HepG2 (cell line): ENCODE measurements at regions of chr1 and their contacts with region 1.

Region 1: GRCh38 chr1:31715087-31715872 is 11.5 kb upstream of the COL16A1 start:
- DNase-seq: peak; percentile 86
- ATAC-seq: peak; percentile 96
- H3K4me3 ChIP-seq: peak overlapping the region; percentile 63 to 82 (median 71)
- H3K27ac ChIP-seq: peak overlapping the region; percentile 93
- H3K4me1 ChIP-seq: peaks cover 31% of the 10 kb centered on the region
- H3K27me3 ChIP-seq: no peaks in the 10 kb centered on the region; a peak in 1 of 5 replicates
- CTCF ChIP-seq: peak; percentile 89
- EP300 ChIP-seq: peak; percentile 11 to 35; a peak in 1 of 4 replicates
- POLR2A ChIP-seq: peak; percentile 85 to 95
- RAD21 ChIP-seq: peak; percentile 73

Region 2: GRCh38 chr1:31644560-31645273 is 70.6 kb before region 1 on chr1 and contains the start of gene PEF1:
- CTCF ChIA-PET with region 1: no interaction called
- POLR2A ChIA-PET with region 1: interaction called, 22 read pairs
- in situ Hi-C with region 1: no loop called
- intact Hi-C with region 1: no loop called
- DNase-seq: peak; percentile 94
- ATAC-seq: peak; percentile 89
- H3K4me3 ChIP-seq: peak within 1 kb of the TSS; percentile 72 to 87 (median 84)
- H3K27ac ChIP-seq: peak within 1 kb of the TSS; percentile 89
- H3K4me1 ChIP-seq: peaks cover 67% of the 10 kb centered on the region
- H3K27me3 ChIP-seq: no peaks in the 10 kb centered on the region; a peak in 1 of 5 replicates
- CTCF ChIP-seq: peak; percentile 2; the same call in 1 of the 2 replicates
- EP300 ChIP-seq: 0 out of 4 replicates have a peak, but pooled peaks of 1 of the 2 experiments have one; percentile 54
- POLR2A ChIP-seq: peak; percentile 12 to 74; a peak in 3 of 4 replicates
- RAD21 ChIP-seq: no peak; the same call in 1 of the 2 replicates
- total RNA-seq, gene PEF1: 57.1 and 85.7 TPM in 2 replicates

Region 3: GRCh38 chr1:31663622-31664452 is 51.4 kb before region 1 on chr1:
- CTCF ChIA-PET with region 1: interaction called, 20 read pairs
- POLR2A ChIA-PET with region 1: interaction called, 13 read pairs
- in situ Hi-C with region 1: no loop called
- intact Hi-C with region 1: no loop called
- DNase-seq: peak; percentile 28
- ATAC-seq: peak; percentile 54
- H3K4me3 ChIP-seq: no peak overlapping the region
- H3K27ac ChIP-seq: no peak overlapping the region
- H3K4me1 ChIP-seq: peaks cover 10% of the 10 kb centered on the region
- H3K27me3 ChIP-seq: no peaks in the 10 kb centered on the region
- CTCF ChIP-seq: peak; percentile 93
- EP300 ChIP-seq: no peak
- POLR2A ChIP-seq: no peak
- RAD21 ChIP-seq: peak; percentile 95

Region 4: DNA sequence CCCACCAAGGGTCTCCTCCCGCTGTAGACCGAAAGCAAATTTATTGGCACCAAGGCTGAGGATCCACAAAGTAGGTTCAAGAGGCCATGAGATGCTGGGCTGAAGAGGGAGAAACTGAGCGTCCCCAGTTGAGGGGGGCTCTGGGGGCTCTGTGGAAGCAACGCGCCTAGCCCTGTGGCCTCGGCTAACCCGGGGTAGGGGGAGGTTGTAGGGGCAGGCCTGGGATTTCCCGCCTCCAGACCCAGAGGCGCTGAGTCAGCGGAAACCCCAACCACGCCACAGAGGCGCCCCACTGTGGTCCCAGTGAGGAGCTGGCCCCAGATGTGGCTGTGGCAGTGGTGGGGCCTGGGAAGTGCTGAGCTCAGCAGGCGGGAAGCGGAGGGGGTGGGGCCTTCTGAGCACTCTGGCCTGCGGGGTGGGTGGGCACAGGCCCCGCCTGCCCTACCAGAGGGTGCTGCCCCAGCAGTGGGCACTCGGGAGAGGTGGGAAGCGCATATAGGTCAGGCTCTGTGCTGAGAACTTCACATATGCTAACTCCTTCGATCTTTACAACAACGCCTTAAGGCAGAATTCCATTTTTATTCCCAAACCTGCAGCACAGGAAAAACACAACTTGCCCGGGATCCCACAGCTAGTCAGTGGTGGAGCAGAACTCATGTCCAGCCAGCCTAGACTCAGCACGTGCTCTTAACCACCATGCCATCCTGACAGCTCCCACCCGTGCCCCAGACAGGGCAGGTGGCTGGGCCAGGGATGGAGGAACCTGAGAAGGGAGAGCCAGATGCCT is 10.0 kb before region 1 on chr1:
- CTCF ChIA-PET with region 1: interaction called, 3 read pairs
- POLR2A ChIA-PET with region 1: interaction called, 73 read pairs
- in situ Hi-C with region 1: no loop called
- intact Hi-C with region 1: no loop called
- DNase-seq: peak; percentile 68
- ATAC-seq: peak; percentile 54
- H3K4me3 ChIP-seq: peak overlapping the region; percentile 54 to 69 (median 55)
- H3K27ac ChIP-seq: peak overlapping the region; percentile 57
- H3K4me1 ChIP-seq: peaks cover 72% of the 10 kb centered on the region
- H3K27me3 ChIP-seq: peaks cover 2 to 18% of the 10 kb centered on the region in 2 experiments; a peak in 3 of 5 replicates
- CTCF ChIP-seq: peak; percentile 93
- EP300 ChIP-seq: no peak
- POLR2A ChIP-seq: no peak
- RAD21 ChIP-seq: peak; percentile 88

Region 5: GRCh38 chr1:31745096-31745945 is 30.0 kb after region 1 on chr1:
- CTCF ChIA-PET with region 1: no interaction called
- POLR2A ChIA-PET with region 1: interaction called, 5 read pairs
- in situ Hi-C with region 1: no loop called
- intact Hi-C with region 1: loop called (anchors 1 kb)
- DNase-seq: peak; percentile 27
- ATAC-seq: peak; percentile 91
- H3K4me3 ChIP-seq: no peak overlapping the region
- H3K27ac ChIP-seq: no peak overlapping the region
- H3K4me1 ChIP-seq: no peaks in the 10 kb centered on the region
- H3K27me3 ChIP-seq: peaks cover 1 to 34% of the 10 kb centered on the region in 2 experiments; a peak in 3 of 5 replicates
- CTCF ChIP-seq: peak; percentile 87
- EP300 ChIP-seq: no peak
- POLR2A ChIP-seq: no peak
- RAD21 ChIP-seq: peak; percentile 78

Region 6: DNA sequence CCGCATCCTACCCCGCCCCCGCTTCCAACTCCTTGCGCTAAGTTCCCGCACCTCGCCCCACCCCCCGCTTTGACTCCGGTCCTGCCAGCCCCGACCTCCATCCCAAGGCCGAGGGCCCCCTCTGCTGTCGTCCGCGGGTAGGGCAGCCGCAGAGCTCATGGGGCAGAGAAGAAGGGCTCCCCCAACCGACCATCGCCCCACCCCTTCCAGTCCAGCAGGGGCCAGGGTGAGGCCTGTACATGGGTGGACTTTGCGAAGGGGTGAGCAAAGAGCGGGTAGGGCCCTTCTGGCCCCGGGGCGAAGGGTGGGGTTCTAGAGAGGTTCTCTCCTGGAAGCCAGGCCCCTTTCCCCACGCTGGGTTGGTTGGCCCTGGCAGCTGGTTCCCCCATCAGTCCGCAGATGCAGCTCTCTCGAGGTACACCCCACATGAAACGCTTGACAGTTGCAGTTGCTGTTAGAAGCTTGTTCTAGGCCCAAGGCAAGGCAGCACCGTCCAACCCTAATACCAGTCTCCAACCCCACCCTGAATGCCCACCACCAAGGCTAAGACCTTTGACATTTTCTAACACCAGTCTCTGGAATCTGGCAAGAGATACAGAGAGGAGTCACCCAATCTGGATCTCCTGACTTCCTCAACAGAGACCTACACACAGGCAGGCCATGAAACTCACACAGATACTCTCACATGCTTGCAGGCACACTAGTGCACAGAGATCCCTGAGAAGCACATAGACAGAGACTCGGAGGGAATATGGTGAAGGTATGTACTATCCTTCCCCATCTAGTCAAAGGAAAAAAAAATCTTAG is 74.2 kb after region 1 on chr1:
- CTCF ChIA-PET with region 1: interaction called, 15 read pairs
- POLR2A ChIA-PET with region 1: interaction called, 9 read pairs
- in situ Hi-C with region 1: no loop called
- intact Hi-C with region 1: loop called (anchors 2 kb)
- DNase-seq: peak; percentile 77
- ATAC-seq: peak; percentile 88
- H3K4me3 ChIP-seq: peak overlapping the region; percentile 51 to 75 (median 59)
- H3K27ac ChIP-seq: no peak overlapping the region
- H3K4me1 ChIP-seq: peaks cover 22% of the 10 kb centered on the region
- H3K27me3 ChIP-seq: peaks cover 3 to 19% of the 10 kb centered on the region in 2 experiments; a peak in 2 of 5 replicates
- CTCF ChIP-seq: peak; percentile 97
- EP300 ChIP-seq: no peak
- POLR2A ChIP-seq: no peak
- RAD21 ChIP-seq: peak; percentile 92